Lower leg skin (tissue), 4 donors: ENCODE measurements at regions of chr5 and their contacts with region 1.

Region 1: GRCh38 chr5:112995764-112996618 is 19.4 kb downstream of the DCP2 start:
- DNase-seq: peak; percentile 71 to 93
- H3K4me3 ChIP-seq: no peak overlapping the region
- CTCF ChIP-seq: peak in 1 of 3 donors; percentile 45
- POLR2A ChIP-seq: no peak

Region 2: GRCh38 chr5:113513384-113514288 is 517.6 kb after region 1 on chr5 and contains the start of gene YTHDC2:
- intact Hi-C with region 1: loop called (anchors 10 kb)
- DNase-seq: peak; percentile 73 to 96
- H3K4me3 ChIP-seq: peak within 1 kb of the TSS; percentile 61
- CTCF ChIP-seq: no peak
- POLR2A ChIP-seq: no peak
- total RNA-seq, gene YTHDC2: 13.8 to 28.4 (median 16.7) TPM

Region 3: GRCh38 chr5:113606298-113607134 is 610.5 kb after region 1 on chr5:
- intact Hi-C with region 1: loop called (anchors 5 kb)
- DNase-seq: peak in 1 of 2 donors; percentile 48
- H3K4me3 ChIP-seq: no peak overlapping the region
- CTCF ChIP-seq: no peak
- POLR2A ChIP-seq: no peak